Right ventricle myocardium inferior (tissue), 1 donor: ENCODE measurements at regions of chr2 and their contacts with region 1.

Region 1: GRCh38 chr2:237674731-237675276 is 47.4 kb downstream of the LRRFIP1 start:
- DNase-seq: peak; percentile 94
- ATAC-seq: peak; percentile 82

Region 2: GRCh38 chr2:237581751-237582746 is 92.8 kb before region 1 on chr2:
- intact Hi-C with region 1: loop called (anchors 5 kb)
- DNase-seq: peak; percentile 85
- ATAC-seq: peak; percentile 95

Region 3: DNA sequence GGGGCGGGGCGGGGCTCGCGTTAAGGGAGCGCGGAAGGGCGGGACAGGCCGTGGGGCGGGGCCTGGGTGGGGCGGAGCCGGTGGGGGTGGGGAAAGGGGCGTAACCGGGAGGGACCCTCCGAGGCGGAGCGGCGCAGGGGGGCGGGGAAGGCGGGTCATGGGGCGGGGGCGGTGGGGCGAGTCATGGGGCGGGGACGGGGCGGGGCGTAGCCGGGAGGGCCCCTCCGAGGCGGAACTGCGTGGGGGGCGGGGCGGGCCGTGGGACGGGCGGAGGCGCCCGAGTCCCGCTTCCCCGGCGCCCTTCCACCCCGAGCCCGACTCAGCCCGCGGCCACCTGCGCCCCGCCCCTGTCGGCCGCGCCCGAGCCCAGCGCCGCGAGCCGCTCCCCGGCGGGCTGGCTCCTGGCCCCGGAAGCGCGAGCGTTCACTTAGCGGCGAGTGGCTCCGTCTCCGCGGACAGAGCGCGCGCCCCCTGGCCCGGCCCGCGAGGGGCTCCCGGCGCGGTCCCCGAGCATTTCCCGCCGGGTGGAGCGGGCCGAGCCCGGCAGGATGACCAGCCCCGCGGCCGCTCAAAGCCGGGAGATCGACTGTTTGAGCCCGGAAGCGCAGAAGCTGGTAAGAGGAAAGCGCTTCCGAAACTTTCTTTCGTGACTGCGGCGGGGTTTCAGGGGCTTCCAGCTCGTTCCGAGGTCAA is 17.2 kb after region 1 on chr2:
- intact Hi-C with region 1: loop called (anchors 2 kb)
- DNase-seq: no peak
- ATAC-seq: peak; percentile 78

Region 4: DNA sequence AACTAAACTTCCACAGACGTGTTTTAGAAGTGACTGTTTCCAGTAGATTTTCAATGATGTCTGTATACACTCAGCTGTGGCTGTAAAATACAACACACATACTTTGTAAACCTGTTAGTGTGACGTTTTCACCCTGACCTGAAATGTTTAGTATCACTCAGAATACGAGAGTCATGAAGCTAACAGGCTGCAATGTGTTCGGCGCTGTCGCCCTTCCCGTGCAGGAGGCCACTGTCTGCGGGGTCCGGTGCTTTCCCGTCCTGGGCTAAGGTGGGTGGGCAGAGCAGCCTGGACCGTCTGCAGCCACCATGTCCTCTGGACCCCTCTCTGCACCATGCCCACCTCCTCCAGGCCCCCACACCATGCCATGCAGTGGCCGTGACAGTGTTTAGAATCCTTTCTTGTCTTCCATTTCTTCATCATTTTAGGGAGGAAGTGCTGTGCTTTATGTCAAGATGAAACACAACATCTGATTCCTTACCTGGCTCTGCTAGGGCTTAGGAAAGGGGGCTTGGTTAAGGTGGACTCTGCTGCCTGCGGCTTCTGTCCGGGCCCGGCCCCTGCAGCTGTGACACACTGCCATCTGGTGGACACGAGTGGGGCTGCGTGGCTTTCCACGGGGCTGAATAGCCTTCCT is 69.9 kb after region 1 on chr2:
- intact Hi-C with region 1: loop called (anchors 1 kb)
- DNase-seq: peak; percentile 89
- ATAC-seq: peak; percentile 79

Region 5: DNA sequence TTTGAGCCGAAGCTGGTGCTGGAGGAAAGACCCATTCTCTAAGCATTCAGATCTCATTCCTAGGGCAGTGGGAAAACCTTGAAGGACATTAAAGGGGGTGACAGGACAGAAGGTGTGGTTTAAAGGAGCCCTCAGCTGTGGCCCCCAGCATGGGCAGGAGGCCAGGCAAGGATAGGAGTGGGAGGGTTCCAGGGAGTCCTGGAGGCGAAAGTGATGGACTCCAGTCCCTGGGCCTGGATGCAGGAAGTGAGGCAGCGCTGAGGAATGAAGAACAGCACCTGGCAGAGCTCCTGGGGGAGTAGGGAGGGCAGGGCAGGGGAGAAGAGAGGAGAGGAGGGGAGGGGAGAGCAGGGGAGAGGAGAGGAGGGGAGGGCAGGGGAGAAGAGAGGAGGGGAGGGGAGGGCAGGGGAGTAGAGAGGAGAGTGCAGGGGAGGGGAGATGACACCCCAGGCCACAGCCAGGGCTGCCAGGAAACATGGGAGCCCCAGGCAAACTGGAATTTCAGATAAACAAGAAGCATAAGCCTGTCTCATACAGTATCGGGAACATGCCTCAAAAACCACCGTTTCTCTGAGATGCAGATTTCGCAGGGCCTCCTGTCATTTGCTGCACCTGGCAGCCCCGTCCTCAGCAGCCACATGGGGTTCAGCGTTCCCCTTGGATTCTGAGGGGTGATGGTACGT is 190.3 kb after region 1 on chr2:
- intact Hi-C with region 1: no loop called
- DNase-seq: no peak
- ATAC-seq: peak; percentile 34

Region 6: DNA sequence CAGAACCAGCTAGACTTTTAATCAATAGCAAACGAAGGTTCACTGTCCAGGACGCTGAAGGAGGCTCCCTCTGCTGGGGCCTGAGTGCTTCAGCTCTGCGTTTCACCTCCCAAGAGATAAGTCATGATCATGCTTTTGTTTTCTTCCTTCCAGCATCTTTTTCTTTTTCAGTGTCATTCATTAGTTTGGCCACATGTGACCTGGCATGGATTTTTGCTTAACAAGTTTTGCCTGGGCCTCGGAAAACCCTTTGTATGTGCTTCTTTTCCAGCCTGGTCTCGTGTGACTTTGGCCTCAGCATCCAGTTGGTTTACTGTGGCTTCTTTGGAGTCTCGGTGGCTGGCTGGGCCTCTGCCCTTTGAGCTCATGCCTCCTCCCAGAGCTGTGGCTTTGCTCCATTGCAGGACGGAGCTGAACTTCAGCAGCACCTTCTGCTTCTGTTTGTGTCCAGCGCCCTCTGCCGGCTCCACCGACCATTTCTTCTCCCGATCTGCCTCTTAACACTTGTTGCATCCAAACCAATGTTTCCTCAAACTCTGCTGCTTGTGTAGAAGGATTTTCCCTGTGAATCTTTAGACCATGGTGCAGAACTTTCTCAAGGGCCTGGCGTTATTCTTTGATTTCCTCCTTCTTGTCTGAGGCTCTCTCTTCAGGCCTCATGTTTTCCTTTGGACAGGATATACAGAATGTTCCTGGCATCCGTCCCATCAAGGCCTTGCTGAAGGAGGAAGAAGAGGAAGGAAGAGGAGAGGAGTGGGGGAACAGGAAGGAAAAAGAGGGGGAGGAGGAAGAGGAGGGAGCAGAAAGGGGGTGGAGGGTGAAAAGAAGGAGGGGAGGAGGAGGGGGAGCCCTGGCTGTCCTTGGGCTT is 588.6 kb after region 1 on chr2:
- intact Hi-C with region 1: loop called (anchors 10 kb)
- DNase-seq: peak; percentile 94
- ATAC-seq: peak; percentile 85